Activated CD4-positive, alpha-beta memory T cell treated with anti-CD3 and anti-CD28 coated beads for 36 hours (primary cell): ENCODE measurements at regions of chr22 and their contacts with region 1.

Region 1: DNA sequence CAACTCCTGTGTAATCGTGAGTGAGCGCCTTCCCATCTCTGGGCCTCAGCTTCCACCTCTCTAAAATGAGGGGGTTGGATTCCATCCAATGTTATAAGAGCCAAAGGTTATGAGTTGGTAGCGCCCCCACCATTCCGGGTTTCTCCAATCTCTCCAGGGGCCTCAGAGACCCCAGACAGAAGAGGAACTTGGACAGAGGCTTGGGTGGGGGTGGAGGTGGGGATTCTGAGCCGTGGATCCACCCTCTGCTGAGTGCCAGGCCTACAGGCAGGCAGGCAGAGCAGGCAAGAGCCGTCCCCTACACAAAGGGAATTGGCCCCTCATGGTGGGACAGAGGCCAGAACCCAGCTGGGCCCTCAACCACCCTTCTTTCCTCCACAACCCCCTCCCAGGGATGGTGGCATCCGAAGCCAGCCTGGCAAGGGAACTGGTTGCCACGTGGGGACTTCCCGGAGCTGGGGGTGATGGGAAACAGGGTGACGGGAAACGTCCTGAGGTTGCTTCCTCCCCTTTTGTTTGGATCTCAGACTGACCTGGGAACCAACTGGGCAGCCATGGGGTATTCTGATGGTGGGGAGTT is 31.8 kb downstream of the TXN2 start:
- DNase-seq: no peak
- H3K4me3 Mint-ChIP-seq: no peak overlapping the region
- H3K27ac Mint-ChIP-seq: peak overlapping the region; percentile 28
- H3K4me1 Mint-ChIP-seq: peaks cover 38% of the 10 kb centered on the region
- H3K27me3 Mint-ChIP-seq: no peaks in the 10 kb centered on the region

Region 2: GRCh38 chr22:36435516-36436415 is 13.9 kb before region 1 on chr22:
- CTCF ChIA-PET with region 1: no interaction called
- POLR2A ChIA-PET with region 1: no interaction called
- intact Hi-C with region 1: loop called (anchors 2 kb)
- DNase-seq: peak; percentile 75
- H3K4me3 Mint-ChIP-seq: peak overlapping the region; percentile 9
- H3K27ac Mint-ChIP-seq: peak overlapping the region; percentile 84
- H3K4me1 Mint-ChIP-seq: peaks cover 39% of the 10 kb centered on the region
- H3K27me3 Mint-ChIP-seq: no peaks in the 10 kb centered on the region